GM12878 (cell line): ENCODE measurements at regions of chr1 and their contacts with region 1.

Region 1: DNA sequence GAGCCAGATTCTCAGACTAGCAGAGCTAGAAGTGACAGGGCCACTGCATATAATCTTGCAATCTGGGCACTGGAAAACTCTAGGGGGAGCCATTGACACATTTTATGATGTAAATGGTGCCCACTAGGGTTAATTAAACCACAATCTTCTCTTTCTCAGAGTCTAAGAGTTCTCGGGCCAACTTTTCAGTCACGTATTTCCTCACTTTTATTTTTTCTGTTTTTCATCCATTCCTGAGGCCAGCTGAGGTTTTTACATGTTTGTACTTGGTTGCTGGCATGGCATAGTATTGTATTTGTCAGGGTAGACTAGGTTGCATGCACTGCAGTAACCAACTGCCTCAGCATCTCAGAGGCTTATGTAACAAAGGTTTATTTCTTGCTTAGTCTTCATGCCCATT is 138.2 kb downstream of the ZNF326 start:
- DNase-seq: no peak
- ATAC-seq: peak; percentile 92
- H3K4me3 ChIP-seq: no peak overlapping the region
- H3K27ac ChIP-seq: no peak overlapping the region
- H3K4me1 ChIP-seq: no peaks in the 10 kb centered on the region
- H3K27me3 ChIP-seq: no peaks in the 10 kb centered on the region; a peak in 1 of 4 replicates
- CTCF ChIP-seq: peak; percentile 45 to 56 (median 47); a peak in 5 of 6 replicates
- EP300 ChIP-seq: no peak
- POLR2A ChIP-seq: no peak
- RAD21 ChIP-seq: peak; percentile 61

Region 2: DNA sequence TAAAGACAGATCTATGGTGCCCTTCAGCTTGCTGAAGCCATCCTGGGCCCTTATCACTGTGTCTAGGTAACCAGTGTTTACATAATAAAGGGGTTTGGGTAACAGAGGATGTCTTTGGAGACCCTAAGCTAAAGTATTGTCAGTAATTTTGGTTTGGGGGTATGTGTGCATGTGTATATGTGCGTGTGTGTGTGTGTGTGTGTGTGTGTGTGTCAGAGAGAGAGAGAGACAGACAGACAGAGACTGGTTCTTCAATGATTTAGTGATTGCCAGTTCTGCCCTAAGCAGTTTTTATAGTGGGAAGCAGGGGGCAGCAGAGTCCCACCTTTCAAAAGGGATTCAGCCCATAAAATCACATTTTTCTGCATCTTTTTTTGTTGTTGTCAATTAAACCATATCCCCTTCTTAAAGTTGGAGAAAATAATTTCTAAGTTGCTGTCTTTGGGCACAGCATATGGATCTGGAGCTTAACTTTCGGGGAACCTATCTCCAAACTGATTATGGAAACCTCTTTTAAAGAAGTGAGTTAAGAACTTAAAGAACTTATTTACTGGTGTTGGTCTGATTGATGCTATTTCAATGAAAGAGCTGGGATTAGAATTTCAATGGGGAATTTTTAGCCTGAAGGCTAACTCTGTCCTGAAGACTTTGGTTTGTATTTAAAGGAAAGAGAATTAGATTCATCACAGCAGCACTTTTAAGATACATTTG is 87.1 kb before region 1 on chr1:
- CTCF ChIA-PET with region 1: interaction called, 17 read pairs
- POLR2A ChIA-PET with region 1: no interaction called
- RAD21 ChIA-PET with region 1: no interaction called
- SMC1A ChIA-PET with region 1: no interaction called
- in situ Hi-C with region 1: no loop called
- intact Hi-C with region 1: no loop called
- DNase-seq: no peak
- ATAC-seq: peak; percentile 85
- H3K4me3 ChIP-seq: no peak overlapping the region
- H3K27ac ChIP-seq: no peak overlapping the region
- H3K4me1 ChIP-seq: no peaks in the 10 kb centered on the region
- H3K27me3 ChIP-seq: no peaks in the 10 kb centered on the region
- CTCF ChIP-seq: peak; percentile 58 to 68 (median 64)
- EP300 ChIP-seq: no peak
- POLR2A ChIP-seq: no peak
- RAD21 ChIP-seq: peak; percentile 60

Region 3: GRCh38 chr1:90083995-90084394 is 49.1 kb before region 1 on chr1:
- CTCF ChIA-PET with region 1: no interaction called
- POLR2A ChIA-PET with region 1: no interaction called
- RAD21 ChIA-PET with region 1: no interaction called
- SMC1A ChIA-PET with region 1: no interaction called
- in situ Hi-C with region 1: no loop called
- intact Hi-C with region 1: no loop called
- DNase-seq: no peak
- ATAC-seq: no peak
- H3K4me3 ChIP-seq: no peak overlapping the region
- H3K27ac ChIP-seq: no peak overlapping the region
- H3K4me1 ChIP-seq: no peaks in the 10 kb centered on the region
- H3K27me3 ChIP-seq: no peaks in the 10 kb centered on the region; a peak in 1 of 4 replicates
- CTCF ChIP-seq: no peak
- EP300 ChIP-seq: no peak
- POLR2A ChIP-seq: no peak
- RAD21 ChIP-seq: no peak

Region 4: DNA sequence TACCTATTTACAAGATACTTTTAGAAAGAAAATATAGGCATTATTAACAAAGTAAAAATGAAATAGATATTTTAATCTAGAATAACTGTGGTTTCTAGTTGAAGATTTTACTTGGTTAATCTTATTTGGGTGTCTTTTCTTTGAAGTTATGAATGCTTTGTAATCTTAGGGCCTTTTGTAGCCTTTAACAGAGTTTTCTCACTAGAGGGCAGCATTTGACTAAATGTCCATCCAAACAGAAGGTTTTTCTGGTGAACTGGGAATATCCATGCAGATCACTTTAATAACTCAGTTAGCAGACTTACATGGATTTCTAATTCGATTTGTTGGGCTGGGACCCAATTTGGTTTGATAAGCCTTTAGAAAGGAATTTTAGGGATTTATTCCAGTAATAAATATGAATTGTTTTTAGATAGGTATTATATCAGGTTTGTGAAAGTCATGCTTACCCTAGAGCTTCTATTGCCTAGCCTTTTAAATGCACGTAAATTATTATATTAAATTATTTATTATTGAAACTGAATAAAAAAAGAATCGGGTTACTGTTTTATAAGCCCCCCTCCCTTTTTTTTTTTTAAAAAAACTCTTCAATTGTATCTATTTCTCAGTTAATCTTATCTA is 18.5 kb before region 1 on chr1:
- CTCF ChIA-PET with region 1: interaction called, 21 read pairs
- POLR2A ChIA-PET with region 1: no interaction called
- RAD21 ChIA-PET with region 1: interaction called, 3 read pairs
- SMC1A ChIA-PET with region 1: interaction called, 24 read pairs
- in situ Hi-C with region 1: no loop called
- intact Hi-C with region 1: no loop called
- DNase-seq: peak; percentile 8
- ATAC-seq: peak; percentile 65
- H3K4me3 ChIP-seq: no peak overlapping the region
- H3K27ac ChIP-seq: no peak overlapping the region
- H3K4me1 ChIP-seq: no peaks in the 10 kb centered on the region
- H3K27me3 ChIP-seq: no peaks in the 10 kb centered on the region
- CTCF ChIP-seq: peak; percentile 55 to 73 (median 72); a peak in 5 of 6 replicates
- EP300 ChIP-seq: no peak
- POLR2A ChIP-seq: no peak
- RAD21 ChIP-seq: peak; percentile 93

Region 5: GRCh38 chr1:90147093-90147492 is 14.0 kb after region 1 on chr1:
- CTCF ChIA-PET with region 1: interaction called, 10 read pairs
- POLR2A ChIA-PET with region 1: interaction called, 3 read pairs
- RAD21 ChIA-PET with region 1: interaction called, 6 read pairs
- SMC1A ChIA-PET with region 1: interaction called, 5 read pairs
- in situ Hi-C with region 1: no loop called
- intact Hi-C with region 1: no loop called
- DNase-seq: no peak
- ATAC-seq: no peak
- H3K4me3 ChIP-seq: no peak overlapping the region
- H3K27ac ChIP-seq: no peak overlapping the region
- H3K4me1 ChIP-seq: no peaks in the 10 kb centered on the region
- H3K27me3 ChIP-seq: no peaks in the 10 kb centered on the region
- CTCF ChIP-seq: no peak
- EP300 ChIP-seq: no peak
- POLR2A ChIP-seq: no peak
- RAD21 ChIP-seq: no peak

Region 6: GRCh38 chr1:90964444-90965035 is 831.4 kb after region 1 on chr1:
- CTCF ChIA-PET with region 1: interaction called, 13 read pairs
- POLR2A ChIA-PET with region 1: no interaction called
- RAD21 ChIA-PET with region 1: interaction called, 4 read pairs
- SMC1A ChIA-PET with region 1: no interaction called
- in situ Hi-C with region 1: no loop called
- intact Hi-C with region 1: no loop called
- DNase-seq: no peak
- ATAC-seq: peak; percentile 65
- H3K4me3 ChIP-seq: no peak overlapping the region
- H3K27ac ChIP-seq: no peak overlapping the region
- H3K4me1 ChIP-seq: peaks cover 5% of the 10 kb centered on the region; the same call in 1 of the 2 replicates
- H3K27me3 ChIP-seq: no peaks in the 10 kb centered on the region
- CTCF ChIP-seq: peak; percentile 12 to 56 (median 18); a peak in 2 of 6 replicates
- EP300 ChIP-seq: no peak
- POLR2A ChIP-seq: no peak
- RAD21 ChIP-seq: peak; percentile 43